Naive thymus-derived CD4-positive, alpha-beta T cell (primary cell): ENCODE measurements at regions of chr10 and their contacts with region 1.

Region 1: DNA sequence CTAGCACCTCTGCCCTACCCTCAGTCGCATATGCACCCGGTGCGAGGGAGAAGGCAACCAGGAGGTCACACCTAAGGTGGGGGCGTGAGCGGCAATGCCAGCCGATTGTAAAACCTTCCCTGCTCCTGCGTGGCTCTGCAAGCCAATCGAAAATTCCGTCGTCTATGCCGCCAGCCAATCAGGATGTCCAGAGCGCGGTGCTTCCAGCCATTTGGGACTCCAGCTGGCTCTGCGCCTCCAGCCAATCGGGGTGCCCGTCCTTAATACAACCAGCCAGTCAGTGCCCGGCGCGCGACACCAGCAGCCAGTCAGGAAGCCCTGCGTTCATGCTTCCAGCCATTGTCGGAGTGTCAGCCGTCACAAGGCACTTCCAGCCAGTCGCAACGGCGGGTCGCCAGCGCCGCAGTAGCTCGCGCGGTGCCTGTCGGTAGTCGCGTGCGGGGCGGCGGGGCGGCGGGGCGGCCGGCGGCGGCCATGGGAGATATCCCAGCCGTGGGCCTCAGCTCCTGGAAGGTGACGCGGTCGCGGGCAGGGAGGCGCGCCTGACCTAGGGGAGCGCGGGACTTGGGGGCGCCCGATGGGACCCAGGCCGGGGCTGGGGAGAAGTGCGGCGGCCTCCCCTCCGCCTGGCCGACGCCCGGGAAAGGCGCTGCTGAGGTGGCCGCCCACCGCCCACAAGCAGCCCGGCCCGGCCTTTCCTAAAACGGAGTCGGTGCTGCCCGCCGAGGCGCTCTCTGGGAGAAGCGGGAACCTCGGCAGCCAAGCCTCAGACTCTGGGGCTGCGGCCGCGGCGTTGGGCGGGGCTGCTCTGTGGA is at the start of gene AKR1E2:
- DNase-seq: peak; percentile 56 to 91 (median 83)
- ATAC-seq: peak; percentile 93
- H3K4me3 ChIP-seq: peak within 1 kb of the TSS; percentile 10
- H3K4me3 Mint-ChIP-seq: peak within 1 kb of the TSS; percentile 61 to 89 (median 84)
- H3K27ac ChIP-seq: peak within 1 kb of the TSS; percentile 72
- H3K27ac Mint-ChIP-seq: peak within 1 kb of the TSS; percentile 12 to 94 (median 85)
- H3K4me1 ChIP-seq: peaks cover 2 to 6% of the 10 kb centered on the region in 2 donors
- H3K4me1 Mint-ChIP-seq: peaks cover 9 to 43% (median 29%) of the 10 kb centered on the region in 7 donors
- H3K27me3 ChIP-seq: peaks cover 0 to 3% of the 10 kb centered on the region in 2 donors
- H3K27me3 Mint-ChIP-seq: peaks cover 0 to 56% (median 31%) of the 10 kb centered on the region in 5 donors
- total RNA-seq, gene AKR1E2: 8.6 to 26.0 (median 25.1) TPM

Region 2: GRCh38 chr10:4372601-4373000 is 453.5 kb before region 1 on chr10:
- CTCF ChIA-PET with region 1: no interaction called
- POLR2A ChIA-PET with region 1: no interaction called
- intact Hi-C with region 1: no loop called
- DNase-seq: no peak
- ATAC-seq: no peak
- H3K4me3 ChIP-seq: no peak overlapping the region
- H3K4me3 Mint-ChIP-seq: no peak overlapping the region
- H3K27ac ChIP-seq: no peak overlapping the region
- H3K27ac Mint-ChIP-seq: no peak overlapping the region
- H3K4me1 ChIP-seq: no peaks in the 10 kb centered on the region
- H3K4me1 Mint-ChIP-seq: no peaks in the 10 kb centered on the region
- H3K27me3 ChIP-seq: no peaks in the 10 kb centered on the region
- H3K27me3 Mint-ChIP-seq: peaks cover 3 to 62% (median 8%) of the 10 kb centered on the region in 5 donors

Region 3: GRCh38 chr10:4839401-4839800 is 13.3 kb after region 1 on chr10:
- CTCF ChIA-PET with region 1: interaction called, 9 read pairs
- POLR2A ChIA-PET with region 1: interaction called, 24 read pairs
- intact Hi-C with region 1: loop called (anchors 1 kb)
- DNase-seq: no peak
- ATAC-seq: no peak
- H3K4me3 ChIP-seq: no peak overlapping the region
- H3K4me3 Mint-ChIP-seq: no peak overlapping the region
- H3K27ac ChIP-seq: no peak overlapping the region
- H3K27ac Mint-ChIP-seq: peak overlapping the region in 7 of 9 donors; percentile 9 to 71 (median 16)
- H3K4me1 ChIP-seq: peaks cover 0 to 36% of the 10 kb centered on the region in 2 donors
- H3K4me1 Mint-ChIP-seq: peaks cover 17 to 48% (median 30%) of the 10 kb centered on the region in 7 donors
- H3K27me3 ChIP-seq: no peaks in the 10 kb centered on the region
- H3K27me3 Mint-ChIP-seq: peaks cover 0 to 3% (median 0%) of the 10 kb centered on the region in 5 donors

Region 4: DNA sequence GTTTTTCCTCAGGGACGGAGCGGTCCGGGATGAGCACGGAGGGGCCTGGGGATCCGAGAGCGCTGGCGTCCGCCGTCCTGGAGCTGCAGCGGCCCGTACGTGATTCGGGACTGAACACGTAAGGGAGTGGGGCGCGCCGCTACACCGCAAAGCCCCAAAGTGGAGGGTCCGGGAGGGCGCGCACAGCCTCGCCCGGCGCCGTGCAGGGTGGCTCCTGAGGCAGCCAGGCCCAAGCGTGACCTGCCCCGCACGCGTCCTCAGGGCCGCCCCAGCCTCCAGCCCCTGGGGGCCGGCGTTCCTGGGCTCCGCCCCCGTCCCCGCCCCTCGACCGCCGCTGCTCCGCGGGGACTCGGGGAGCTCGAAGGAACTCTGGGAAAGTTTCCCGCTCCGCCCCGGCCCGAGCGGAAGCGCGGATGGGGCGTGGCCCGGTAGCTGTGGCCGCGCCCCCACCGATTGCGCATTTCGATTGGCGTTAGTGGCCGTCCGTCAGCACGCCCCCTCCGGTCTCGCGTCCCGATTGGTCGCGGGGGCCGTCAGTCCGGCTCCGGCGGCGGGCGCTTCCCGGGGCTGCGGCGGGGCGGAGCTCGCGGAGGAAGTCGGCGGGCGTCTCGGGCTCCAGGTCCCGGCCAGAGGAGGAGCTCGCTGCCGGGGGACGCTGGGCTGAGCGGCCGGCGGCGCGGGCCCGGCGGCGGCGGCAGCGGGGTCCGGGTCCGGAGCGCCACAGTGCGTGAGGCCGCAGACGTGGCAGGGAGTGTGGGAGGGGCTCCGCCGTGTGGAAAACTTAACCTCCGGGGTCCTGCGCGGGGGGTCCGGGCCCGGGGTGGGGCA is 1063.8 kb after region 1 on chr10 and contains the starts of genes ANKRD16 and FBH1:
- CTCF ChIA-PET with region 1: no interaction called
- POLR2A ChIA-PET with region 1: no interaction called
- intact Hi-C with region 1: loop called in 1 of 2 experiments (anchors 10 kb)
- DNase-seq: peak; percentile 94 to 100 (median 96)
- ATAC-seq: peak; percentile 96
- H3K4me3 ChIP-seq: peak within 1 kb of the TSS; percentile 70
- H3K4me3 Mint-ChIP-seq: peak within 1 kb of the TSS; percentile 90 to 97 (median 94)
- H3K27ac ChIP-seq: peak within 1 kb of the TSS; percentile 81
- H3K27ac Mint-ChIP-seq: peak within 1 kb of the TSS; percentile 80 to 94 (median 87)
- H3K4me1 ChIP-seq: peaks cover 12% of the 10 kb centered on the region in 2 donors
- H3K4me1 Mint-ChIP-seq: peaks cover 34 to 64% (median 60%) of the 10 kb centered on the region in 7 donors
- H3K27me3 ChIP-seq: no peaks in the 10 kb centered on the region
- H3K27me3 Mint-ChIP-seq: no peaks in the 10 kb centered on the region
- total RNA-seq, gene ANKRD16: 4.6 to 9.8 (median 7.2) TPM
- total RNA-seq, gene FBH1: 64.8 to 105 (median 78.6) TPM